Tibial artery (tissue), 4 donors: ENCODE measurements at regions of chr1 and their contacts with region 1.

Region 1: GRCh38 chr1:84690397-84691121 is at the start of gene SSX2IP:
- DNase-seq: peak; percentile 95 to 99
- H3K4me3 ChIP-seq: peak within 1 kb of the TSS; percentile 92 to 96
- H3K27ac ChIP-seq: peak within 1 kb of the TSS; percentile 86 to 87
- H3K4me1 ChIP-seq: peaks cover 0 to 20% (median 10%) of the 10 kb centered on the region in 4 donors
- H3K27me3 ChIP-seq: no peaks in the 10 kb centered on the region
- CTCF ChIP-seq: no peak

Region 2: GRCh38 chr1:84573967-84574842 is 116.4 kb before region 1 on chr1 and contains the start of gene CTBS:
- intact Hi-C with region 1: loop called (anchors 5 kb)
- DNase-seq: peak; percentile 81 to 93
- H3K4me3 ChIP-seq: peak within 1 kb of the TSS; percentile 74 to 77
- H3K27ac ChIP-seq: peak within 1 kb of the TSS; percentile 98 to 99
- H3K4me1 ChIP-seq: peaks cover 0 to 29% (median 9%) of the 10 kb centered on the region in 4 donors
- H3K27me3 ChIP-seq: no peaks in the 10 kb centered on the region
- CTCF ChIP-seq: no peak

Region 3: GRCh38 chr1:85413169-85413568 is 722.6 kb after region 1 on chr1:
- intact Hi-C with region 1: no loop called
- DNase-seq: no peak
- H3K4me3 ChIP-seq: no peak overlapping the region
- H3K27ac ChIP-seq: no peak overlapping the region
- H3K4me1 ChIP-seq: peaks cover 0 to 32% (median 4%) of the 10 kb centered on the region in 4 donors
- H3K27me3 ChIP-seq: no peaks in the 10 kb centered on the region
- CTCF ChIP-seq: no peak